ENCODE measurements at regions of chr2 and their contacts with region 1.

Region 1: DNA sequence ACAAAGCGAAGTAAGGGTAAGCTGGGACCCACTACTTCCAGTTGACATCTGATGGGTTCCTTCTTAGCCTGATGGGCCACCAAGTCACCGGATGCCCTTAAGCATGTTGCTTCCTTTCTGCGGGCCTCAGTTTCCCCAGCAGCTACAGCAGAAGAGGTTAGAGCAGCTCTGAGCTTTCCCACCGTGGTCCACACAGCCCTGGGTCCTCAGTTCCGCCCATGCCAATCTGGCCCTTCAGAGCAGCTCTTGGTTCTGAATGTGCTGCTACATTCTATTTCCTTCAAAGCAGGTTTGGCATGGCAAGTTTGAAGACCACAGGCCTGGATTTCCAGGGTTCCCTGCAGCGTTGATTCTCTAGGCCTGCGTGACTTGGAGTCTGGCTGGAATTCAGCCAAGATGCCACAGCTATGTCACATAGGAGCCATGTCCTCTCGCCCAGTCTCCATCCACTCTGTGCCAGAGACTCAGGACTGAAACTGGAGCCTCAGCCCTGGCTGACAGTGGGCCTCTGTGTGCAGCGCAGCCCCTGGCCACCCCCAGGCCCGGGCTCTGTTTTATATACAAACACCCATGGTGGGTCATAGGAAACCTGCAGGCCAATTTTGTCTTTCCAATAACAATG is 79.6 kb downstream of the TFCP2L1 start:
- DNase-seq: no peak
- H3K4me3 ChIP-seq: no peak overlapping the region
- H3K27ac ChIP-seq: no peak overlapping the region
- H3K4me1 ChIP-seq: peaks cover 7% of the 10 kb centered on the region
- H3K27me3 ChIP-seq: no peaks in the 10 kb centered on the region
- CTCF ChIP-seq: no peak

Region 2: DNA sequence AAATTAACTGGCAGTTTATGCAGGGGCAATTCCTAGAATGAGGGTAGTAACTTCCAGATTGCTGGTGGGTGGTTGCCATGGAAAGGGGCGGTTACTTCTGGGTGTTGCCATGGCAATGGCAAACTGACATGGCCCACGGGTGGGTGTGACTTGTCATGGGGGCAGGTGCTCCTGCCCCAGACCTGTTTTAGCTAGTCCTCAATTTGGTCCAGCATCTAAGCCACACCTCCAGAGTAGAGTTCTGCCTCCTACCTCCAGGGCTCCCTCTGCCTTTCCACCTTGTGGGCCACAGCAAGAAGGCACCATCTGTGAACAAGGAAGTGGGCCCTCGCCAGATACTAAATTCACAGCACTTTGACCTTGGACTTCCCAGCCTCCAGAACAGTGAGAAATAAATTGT is 69.1 kb before region 1 on chr2:
- CTCF ChIA-PET with region 1: no interaction called
- dilution Hi-C with region 1: loop called (anchors 5 kb)
- in situ Hi-C with region 1: no loop called
- intact Hi-C with region 1: no loop called
- DNase-seq: no peak
- H3K4me3 ChIP-seq: no peak overlapping the region
- H3K27ac ChIP-seq: no peak overlapping the region
- H3K4me1 ChIP-seq: peaks cover 6% of the 10 kb centered on the region
- H3K27me3 ChIP-seq: no peaks in the 10 kb centered on the region
- CTCF ChIP-seq: peak in 1 of 2 donors; percentile 6

Region 3: DNA sequence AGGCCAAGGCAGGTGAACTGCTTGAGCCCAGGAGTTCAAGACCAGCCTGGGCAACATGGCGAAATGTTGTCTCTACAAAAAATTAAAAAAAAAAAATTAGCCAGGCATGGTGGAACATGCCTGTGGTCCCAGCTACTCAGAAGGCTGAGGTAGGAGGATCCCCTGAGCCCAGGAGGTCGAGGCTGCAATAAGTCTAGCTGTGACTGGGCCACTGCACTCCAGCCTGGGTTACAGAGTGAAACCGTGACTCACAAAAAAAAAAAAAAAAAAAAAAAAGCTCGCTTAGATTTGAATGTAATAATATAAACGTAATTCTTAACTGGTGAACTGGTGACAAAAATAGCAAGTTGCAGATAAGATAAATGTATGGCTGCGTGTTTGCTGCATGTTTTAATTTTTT is 23.1 kb after region 1 on chr2:
- CTCF ChIA-PET with region 1: interaction called, 12 read pairs
- dilution Hi-C with region 1: no loop called
- in situ Hi-C with region 1: no loop called
- intact Hi-C with region 1: no loop called
- DNase-seq: no peak
- H3K4me3 ChIP-seq: no peak overlapping the region
- H3K27ac ChIP-seq: no peak overlapping the region
- H3K4me1 ChIP-seq: no peaks in the 10 kb centered on the region
- H3K27me3 ChIP-seq: no peaks in the 10 kb centered on the region
- CTCF ChIP-seq: no peak

Region 4: GRCh38 chr2:121266543-121267106 is 61.2 kb after region 1 on chr2:
- CTCF ChIA-PET with region 1: no interaction called
- dilution Hi-C with region 1: no loop called
- in situ Hi-C with region 1: no loop called
- intact Hi-C with region 1: no loop called
- DNase-seq: no peak
- H3K4me3 ChIP-seq: no peak overlapping the region
- H3K27ac ChIP-seq: no peak overlapping the region
- H3K4me1 ChIP-seq: no peaks in the 10 kb centered on the region
- H3K27me3 ChIP-seq: no peaks in the 10 kb centered on the region
- CTCF ChIP-seq: no peak

Measured in mammary epithelial cell (primary cell).